BJ (cell line): ENCODE measurements at regions of chr19 and their contacts with region 1.

Region 1: DNA sequence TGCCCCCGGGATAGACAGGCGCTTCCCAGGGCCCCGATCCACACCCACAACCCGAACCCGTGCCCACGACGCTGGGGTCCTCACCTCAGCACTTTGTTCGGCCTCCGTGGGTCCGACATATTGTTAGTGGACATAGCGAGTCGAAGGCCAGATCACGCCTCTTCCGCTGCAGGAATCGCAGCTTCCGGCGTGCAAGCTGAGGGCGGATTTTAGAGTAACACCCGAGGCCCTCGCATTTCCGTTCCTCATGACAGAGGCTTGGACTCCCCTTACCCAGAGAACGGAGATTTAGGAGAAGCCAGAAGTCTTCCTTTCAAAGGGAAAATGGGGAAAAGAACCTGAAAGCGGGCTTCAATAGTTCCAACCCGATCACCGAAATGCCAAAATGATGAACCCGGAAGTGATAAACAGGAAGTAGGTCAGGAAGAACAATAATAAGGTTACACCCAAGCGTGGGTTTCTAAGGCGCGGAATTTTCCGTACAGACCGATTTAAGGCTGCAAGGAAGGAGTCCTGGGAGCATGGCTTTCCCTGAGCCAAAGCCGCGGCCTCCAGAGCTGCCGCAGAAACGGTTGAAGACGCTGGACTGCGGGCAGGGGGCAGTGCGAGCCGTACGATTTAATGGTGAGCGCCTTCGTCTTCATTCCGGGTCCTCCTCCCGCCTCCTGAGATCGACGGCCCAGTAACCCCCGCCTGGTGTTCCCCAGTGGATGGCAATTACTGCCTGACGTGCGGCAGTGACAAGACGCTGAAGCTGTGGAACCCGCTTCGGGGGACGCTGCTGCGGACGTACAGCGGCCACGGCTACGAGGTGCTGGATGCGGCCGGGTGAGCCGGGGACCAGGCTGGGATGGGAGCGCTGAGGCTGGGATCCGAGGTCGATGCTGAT is 2.9 kb downstream of the WDR83 start:
- DNase-seq: peak; percentile 24
- H3K4me3 ChIP-seq: peak overlapping the region; percentile 82
- H3K27me3 ChIP-seq: no peaks in the 10 kb centered on the region
- CTCF ChIP-seq: 0 out of 2 replicates have a peak, but pooled peaks have one; percentile 13

Region 2: DNA sequence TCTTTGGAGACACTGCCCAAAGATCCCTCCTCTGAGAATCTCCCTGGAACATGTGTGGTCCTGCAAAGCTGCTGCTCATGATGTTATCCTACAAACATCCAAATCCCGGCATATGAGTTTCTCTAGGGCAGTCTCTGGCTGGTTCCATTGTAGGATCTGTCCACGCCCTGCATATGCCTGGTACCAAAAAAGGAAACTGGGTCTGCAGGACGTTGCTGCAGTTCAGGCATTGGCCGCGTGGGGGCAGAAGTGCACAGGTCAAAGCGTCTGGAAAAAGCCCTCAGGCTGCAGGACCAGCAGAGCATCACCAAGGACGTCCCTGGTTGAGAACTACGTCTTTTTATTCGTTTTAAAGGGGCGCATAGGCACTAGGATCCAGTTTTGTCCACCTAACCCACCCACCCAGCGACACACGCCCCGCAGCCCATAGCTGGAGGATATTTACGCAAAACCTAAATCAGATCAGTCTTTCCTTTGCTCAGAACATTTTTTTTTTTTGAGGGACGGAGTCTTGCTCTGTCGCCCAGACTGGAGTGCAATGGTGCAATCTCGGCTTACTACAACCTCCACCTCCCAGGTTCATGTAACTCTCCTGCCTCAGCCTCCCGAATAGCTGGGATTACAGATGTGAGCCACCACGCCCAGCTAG is 105.4 kb before region 1 on chr19:
- CTCF ChIA-PET with region 1: interaction called, 19 read pairs
- POLR2A ChIA-PET with region 1: no interaction called
- DNase-seq: peak; percentile 73
- H3K4me3 ChIP-seq: no peak overlapping the region
- H3K27me3 ChIP-seq: no peaks in the 10 kb centered on the region
- CTCF ChIP-seq: peak; percentile 98

Region 3: DNA sequence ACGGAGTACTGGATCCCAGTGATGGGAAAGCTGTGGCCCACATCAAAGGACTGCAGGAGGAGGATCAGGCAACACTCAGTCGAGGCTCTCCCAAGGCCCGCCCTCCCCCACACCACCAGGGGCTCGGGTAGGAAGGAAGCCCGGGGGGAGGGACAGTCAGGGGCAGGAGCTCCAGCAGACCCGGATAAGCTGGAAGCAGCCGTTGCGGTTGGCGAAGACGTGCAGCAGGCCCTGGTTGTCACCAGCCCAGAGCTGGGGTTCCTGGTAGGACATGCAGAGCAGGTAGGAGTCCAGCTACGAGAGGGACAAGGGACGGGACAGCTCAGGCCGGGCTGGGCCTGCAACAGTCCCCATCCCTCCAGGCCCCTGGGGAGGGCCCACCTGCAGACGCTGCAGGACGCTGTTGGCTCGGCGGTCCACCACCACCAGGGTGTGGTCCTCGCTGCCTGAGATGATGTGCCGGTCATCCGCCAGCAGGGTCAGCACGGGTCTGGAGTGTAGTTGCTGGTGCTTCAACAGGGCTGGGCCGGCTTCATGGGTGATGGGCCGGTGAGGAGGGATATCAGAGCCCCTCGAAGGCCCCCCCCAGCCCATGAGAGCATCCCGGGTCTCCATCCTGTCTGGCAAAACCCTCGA is 20.2 kb after region 1 on chr19:
- CTCF ChIA-PET with region 1: no interaction called
- POLR2A ChIA-PET with region 1: no interaction called
- DNase-seq: no peak
- H3K4me3 ChIP-seq: no peak overlapping the region
- H3K27me3 ChIP-seq: no peaks in the 10 kb centered on the region
- CTCF ChIP-seq: no peak